ENCODE measurements at regions of chr4 and their contacts with region 1.

Region 1: DNA sequence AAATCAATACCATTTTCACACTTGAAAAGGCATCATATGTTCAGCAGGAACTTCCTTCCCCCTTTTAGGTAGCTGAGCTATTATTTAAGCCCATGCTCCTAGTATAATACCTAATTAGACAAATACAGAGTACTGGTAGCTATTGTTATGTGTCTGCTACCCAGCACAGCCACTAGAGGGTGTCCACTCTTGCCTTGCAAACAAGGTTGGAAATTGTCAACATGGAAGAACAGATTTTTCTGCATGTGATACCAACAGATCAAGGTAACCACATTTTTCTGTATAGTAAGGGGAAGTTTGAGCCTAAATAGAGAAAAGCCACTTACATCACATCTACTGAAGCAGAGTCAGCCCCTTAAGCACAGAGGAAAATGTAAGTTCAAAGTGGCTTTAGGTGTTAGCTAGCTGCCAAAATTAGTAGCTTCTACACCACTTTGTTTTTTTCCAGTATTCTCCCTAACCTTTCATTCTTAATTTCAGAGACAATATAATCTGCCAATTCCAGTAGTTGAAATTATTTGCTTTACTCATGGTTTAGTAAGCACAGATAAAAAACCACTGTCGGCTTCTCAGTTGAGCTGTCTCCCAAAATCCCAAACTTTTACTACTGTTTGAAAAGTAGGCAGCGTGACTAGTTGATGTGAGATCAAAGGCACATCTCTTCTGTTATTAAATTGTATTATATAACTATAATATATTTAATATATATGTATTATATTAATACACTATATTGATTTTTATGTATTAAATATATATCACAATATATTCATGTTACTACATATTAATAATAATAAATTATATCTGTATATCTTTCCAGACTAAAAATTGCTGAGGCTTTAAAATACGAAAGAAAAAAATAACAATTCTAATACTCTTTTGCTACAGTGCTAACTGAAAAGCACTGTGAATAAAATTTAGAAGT is 38.2 kb downstream of the EDNRA start:
- DNase-seq: peak; percentile 28
- ATAC-seq: peak; percentile 97
- H3K4me3 ChIP-seq: no peak overlapping the region
- H3K27ac ChIP-seq: no peak overlapping the region
- H3K4me1 ChIP-seq: no peaks in the 10 kb centered on the region
- H3K27me3 ChIP-seq: no peaks in the 10 kb centered on the region; a peak in 1 of 4 replicates
- CTCF ChIP-seq: peak; percentile 93 to 96 (median 93)
- EP300 ChIP-seq: no peak
- POLR2A ChIP-seq: no peak
- RAD21 ChIP-seq: peak; percentile 94

Region 2: DNA sequence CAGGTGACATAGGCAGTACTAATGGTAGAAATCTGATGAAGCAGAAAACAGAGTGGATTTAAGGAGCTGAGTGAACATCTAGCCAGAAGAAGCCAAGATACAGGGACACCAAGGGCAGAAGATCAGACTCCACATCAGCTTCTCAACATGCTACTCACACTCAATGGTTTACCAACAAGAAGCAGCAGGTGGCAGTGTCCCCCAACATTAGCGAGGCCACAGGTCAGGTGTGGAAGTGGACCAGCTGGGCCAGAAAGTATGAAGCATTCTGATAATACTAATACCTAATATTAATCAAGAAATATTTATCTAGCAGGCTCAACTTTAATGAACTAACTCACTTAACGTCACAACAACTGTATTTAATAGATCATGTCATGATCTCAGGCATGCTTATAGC is 500.0 kb before region 1 on chr4:
- CTCF ChIA-PET with region 1: no interaction called
- POLR2A ChIA-PET with region 1: no interaction called
- RAD21 ChIA-PET with region 1: interaction called, 4 read pairs
- SMC1A ChIA-PET with region 1: no interaction called
- in situ Hi-C with region 1: no loop called
- intact Hi-C with region 1: loop called (anchors 5 kb)
- DNase-seq: no peak
- ATAC-seq: peak; percentile 97
- H3K4me3 ChIP-seq: no peak overlapping the region
- H3K27ac ChIP-seq: no peak overlapping the region
- H3K4me1 ChIP-seq: no peaks in the 10 kb centered on the region
- H3K27me3 ChIP-seq: no peaks in the 10 kb centered on the region; a peak in 1 of 4 replicates
- CTCF ChIP-seq: peak; percentile 64 to 78 (median 71)
- EP300 ChIP-seq: no peak
- POLR2A ChIP-seq: no peak
- RAD21 ChIP-seq: peak; percentile 90

Region 3: GRCh38 chr4:147160908-147161513 is 358.1 kb before region 1 on chr4:
- CTCF ChIA-PET with region 1: interaction called, 4 read pairs
- POLR2A ChIA-PET with region 1: no interaction called
- RAD21 ChIA-PET with region 1: interaction called, 4 read pairs
- SMC1A ChIA-PET with region 1: interaction called, 3 read pairs
- in situ Hi-C with region 1: no loop called
- intact Hi-C with region 1: loop called (anchors 5 kb)
- DNase-seq: no peak
- ATAC-seq: peak; percentile 89
- H3K4me3 ChIP-seq: no peak overlapping the region
- H3K27ac ChIP-seq: no peak overlapping the region
- H3K4me1 ChIP-seq: no peaks in the 10 kb centered on the region
- H3K27me3 ChIP-seq: peaks cover 0 to 7% of the 10 kb centered on the region in 2 experiments; a peak in 2 of 4 replicates
- CTCF ChIP-seq: peak; percentile 68 to 79 (median 71)
- EP300 ChIP-seq: no peak
- POLR2A ChIP-seq: no peak
- RAD21 ChIP-seq: peak; percentile 79

Region 4: GRCh38 chr4:147488556-147488955 is 30.6 kb before region 1 on chr4:
- CTCF ChIA-PET with region 1: no interaction called
- POLR2A ChIA-PET with region 1: no interaction called
- RAD21 ChIA-PET with region 1: no interaction called
- SMC1A ChIA-PET with region 1: no interaction called
- in situ Hi-C with region 1: no loop called
- intact Hi-C with region 1: no loop called
- DNase-seq: no peak
- ATAC-seq: no peak
- H3K4me3 ChIP-seq: no peak overlapping the region
- H3K27ac ChIP-seq: no peak overlapping the region
- H3K4me1 ChIP-seq: no peaks in the 10 kb centered on the region
- H3K27me3 ChIP-seq: no peaks in the 10 kb centered on the region; a peak in 1 of 4 replicates
- CTCF ChIP-seq: no peak
- EP300 ChIP-seq: no peak
- POLR2A ChIP-seq: no peak
- RAD21 ChIP-seq: no peak

Region 5: DNA sequence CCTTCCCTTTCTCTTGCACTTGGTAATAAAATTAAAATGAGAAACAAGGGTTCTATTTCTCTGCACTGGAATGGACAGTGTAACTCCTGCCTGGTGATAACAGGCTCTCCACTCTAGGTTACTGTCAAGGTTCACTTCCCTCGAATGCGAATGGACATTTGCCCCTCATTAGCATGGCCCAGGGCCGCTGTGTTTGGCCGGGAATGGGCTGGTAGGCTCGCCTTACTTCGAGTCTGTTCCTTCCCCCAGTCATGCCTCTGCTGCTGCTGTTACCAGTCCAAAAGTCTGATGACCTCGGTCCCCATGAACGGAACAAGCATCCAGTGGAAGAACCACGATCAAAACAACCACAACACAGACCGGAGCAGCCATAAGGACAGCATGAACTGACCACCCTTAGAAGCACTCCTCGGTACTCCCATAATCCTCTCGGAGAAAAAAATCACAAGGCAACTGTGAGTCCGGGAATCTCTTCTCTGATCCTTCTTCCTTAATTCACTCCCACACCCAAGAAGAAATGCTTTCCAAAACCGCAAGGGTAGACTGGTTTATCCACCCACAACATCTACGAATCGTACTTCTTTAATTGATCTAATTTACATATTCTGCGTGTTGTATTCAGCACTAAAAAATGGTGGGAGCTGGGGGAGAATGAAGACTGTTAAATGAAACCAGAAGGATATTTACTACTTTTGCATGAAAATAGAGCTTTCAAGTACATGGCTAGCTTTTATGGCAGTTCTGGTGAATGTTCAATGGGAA is 23.3 kb after region 1 on chr4:
- CTCF ChIA-PET with region 1: interaction called, 15 read pairs
- POLR2A ChIA-PET with region 1: no interaction called
- RAD21 ChIA-PET with region 1: interaction called, 4 read pairs
- SMC1A ChIA-PET with region 1: interaction called, 3 read pairs
- in situ Hi-C with region 1: no loop called
- intact Hi-C with region 1: no loop called
- DNase-seq: no peak
- ATAC-seq: no peak; the same call in 2 of the 3 replicates
- H3K4me3 ChIP-seq: no peak overlapping the region
- H3K27ac ChIP-seq: no peak overlapping the region
- H3K4me1 ChIP-seq: no peaks in the 10 kb centered on the region
- H3K27me3 ChIP-seq: no peaks in the 10 kb centered on the region
- CTCF ChIP-seq: no peak
- EP300 ChIP-seq: no peak
- POLR2A ChIP-seq: no peak
- RAD21 ChIP-seq: no peak

Region 6: GRCh38 chr4:147596981-147597380 is 77.9 kb after region 1 on chr4:
- CTCF ChIA-PET with region 1: interaction called, 10 read pairs
- POLR2A ChIA-PET with region 1: no interaction called
- RAD21 ChIA-PET with region 1: interaction called, 5 read pairs
- SMC1A ChIA-PET with region 1: interaction called, 10 read pairs
- in situ Hi-C with region 1: no loop called
- intact Hi-C with region 1: no loop called
- DNase-seq: no peak
- ATAC-seq: no peak
- H3K4me3 ChIP-seq: no peak overlapping the region
- H3K27ac ChIP-seq: no peak overlapping the region
- H3K4me1 ChIP-seq: no peaks in the 10 kb centered on the region
- H3K27me3 ChIP-seq: no peaks in the 10 kb centered on the region; a peak in 1 of 4 replicates
- CTCF ChIP-seq: no peak
- EP300 ChIP-seq: no peak
- POLR2A ChIP-seq: no peak
- RAD21 ChIP-seq: no peak